ENCODE measurements at regions of chr5 and their contacts with region 1.

Region 1: GRCh38 chr5:132820162-132820754 is 7.2 kb downstream of the SOWAHA start:
- DNase-seq: peak; percentile 37
- H3K4me3 ChIP-seq: no peak overlapping the region
- CTCF ChIP-seq: peak; percentile 82

Region 2: GRCh38 chr5:132526290-132526973 is 293.8 kb before region 1 on chr5:
- CTCF ChIA-PET with region 1: interaction called, 47 read pairs
- POLR2A ChIA-PET with region 1: no interaction called
- DNase-seq: no peak
- H3K4me3 ChIP-seq: peak overlapping the region; percentile 6; the same call in 1 of the 2 replicates
- CTCF ChIP-seq: peak; percentile 53

Region 3: GRCh38 chr5:132607095-132607494 is 213.2 kb before region 1 on chr5:
- CTCF ChIA-PET with region 1: no interaction called
- POLR2A ChIA-PET with region 1: no interaction called
- DNase-seq: no peak
- H3K4me3 ChIP-seq: no peak overlapping the region
- CTCF ChIP-seq: no peak

Region 4: DNA sequence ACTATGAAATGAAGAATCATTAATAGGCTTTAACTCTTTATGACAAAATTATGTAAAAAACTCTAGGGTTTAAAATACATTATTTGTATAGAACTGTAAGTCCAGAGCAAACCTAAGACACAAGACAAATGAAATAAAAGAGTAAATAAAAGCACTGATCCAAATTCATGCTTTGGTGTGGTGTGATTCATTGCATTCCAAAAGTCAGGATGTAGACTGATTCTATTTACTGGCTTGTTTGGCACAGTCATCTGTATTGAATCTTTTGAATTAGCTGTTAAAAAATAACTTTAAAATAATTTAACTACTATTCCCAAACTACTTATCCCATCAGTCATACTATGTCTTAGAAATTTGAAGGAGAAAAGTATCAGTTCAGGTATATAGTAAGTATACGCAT is 115.4 kb before region 1 on chr5:
- CTCF ChIA-PET with region 1: interaction called, 23 read pairs
- POLR2A ChIA-PET with region 1: no interaction called
- DNase-seq: no peak
- H3K4me3 ChIP-seq: no peak overlapping the region
- CTCF ChIP-seq: no peak

Region 5: GRCh38 chr5:132746954-132747615 is 73.2 kb before region 1 on chr5 and contains the start of gene CCNI2:
- CTCF ChIA-PET with region 1: interaction called, 317 read pairs
- POLR2A ChIA-PET with region 1: no interaction called
- DNase-seq: no peak
- H3K4me3 ChIP-seq: peak within 1 kb of the TSS; percentile 41
- CTCF ChIP-seq: peak; percentile 11

Region 6: GRCh38 chr5:132802044-132802684 is 18.1 kb before region 1 on chr5:
- CTCF ChIA-PET with region 1: interaction called, 74 read pairs
- POLR2A ChIA-PET with region 1: no interaction called
- DNase-seq: no peak
- H3K4me3 ChIP-seq: no peak overlapping the region
- CTCF ChIP-seq: no peak

Region 7: GRCh38 chr5:132844904-132845303 is 24.6 kb after region 1 on chr5:
- CTCF ChIA-PET with region 1: interaction called, 32 read pairs
- POLR2A ChIA-PET with region 1: no interaction called
- DNase-seq: no peak
- H3K4me3 ChIP-seq: no peak overlapping the region
- CTCF ChIP-seq: no peak

Region 8: GRCh38 chr5:132883261-132883834 is 63.1 kb after region 1 on chr5:
- CTCF ChIA-PET with region 1: interaction called, 13 read pairs
- POLR2A ChIA-PET with region 1: no interaction called
- DNase-seq: no peak
- H3K4me3 ChIP-seq: no peak overlapping the region
- CTCF ChIP-seq: peak; percentile 71

Measured in AG04449 (cell line).